PC-3 (cell line): ENCODE measurements at regions of chr20 and their contacts with region 1.

Region 1: DNA sequence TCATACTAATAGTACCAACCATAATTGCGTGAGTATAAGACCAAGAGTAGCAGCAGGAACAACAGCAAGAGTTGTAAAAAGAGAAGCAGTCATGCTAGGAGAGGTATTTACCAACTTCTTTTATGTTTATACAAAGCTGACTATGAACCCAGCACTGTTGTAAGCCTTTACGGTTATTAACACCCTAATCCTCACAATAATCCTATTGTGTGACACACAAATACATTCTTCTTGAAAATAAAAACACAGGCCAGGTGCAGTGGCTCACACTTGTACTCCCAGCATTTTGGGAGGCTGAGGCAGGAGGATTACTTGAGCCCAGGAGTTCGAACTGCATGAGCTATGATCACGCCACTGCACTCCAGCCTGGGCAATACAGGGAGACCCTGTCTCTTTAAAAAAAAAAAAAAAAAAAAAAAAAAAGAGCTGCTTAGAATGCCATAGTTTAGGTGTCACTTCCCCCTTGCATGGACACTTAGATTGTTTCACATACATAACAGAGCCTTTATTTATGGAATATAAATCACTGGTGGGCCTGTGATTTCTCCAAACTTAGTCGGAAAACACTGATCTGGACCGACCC is 20.2 kb downstream of the HCK start:
- DNase-seq: no peak
- ATAC-seq: no peak
- H3K4me3 ChIP-seq: no peak overlapping the region
- H3K27ac ChIP-seq: no peak overlapping the region
- H3K4me1 ChIP-seq: no peaks in the 10 kb centered on the region
- H3K27me3 ChIP-seq: peaks cover 55% of the 10 kb centered on the region
- CTCF ChIP-seq: no peak

Region 2: DNA sequence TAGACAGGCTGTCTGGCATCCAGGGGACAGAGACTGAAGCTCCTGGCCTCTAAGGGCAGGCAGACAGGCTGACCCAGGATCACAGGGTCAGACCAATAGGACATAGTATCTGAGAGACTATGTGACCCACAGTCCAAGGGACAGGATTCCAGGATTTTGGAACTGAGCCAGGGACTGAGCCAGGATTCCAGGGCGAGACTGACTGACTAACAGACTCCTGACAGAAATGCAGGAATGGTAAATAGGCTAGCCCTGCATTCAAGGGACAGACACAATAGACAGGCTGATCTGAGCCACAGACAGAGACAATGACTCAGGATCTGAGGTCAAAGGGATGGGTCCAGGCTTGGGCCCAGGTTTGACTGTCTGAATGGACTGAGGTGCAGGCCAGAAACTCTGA is 84.5 kb before region 1 on chr20:
- CTCF ChIA-PET with region 1: no interaction called
- POLR2A ChIA-PET with region 1: no interaction called
- intact Hi-C with region 1: no loop called
- DNase-seq: peak; percentile 50
- ATAC-seq: peak; percentile 65
- H3K4me3 ChIP-seq: no peak overlapping the region
- H3K27ac ChIP-seq: no peak overlapping the region
- H3K4me1 ChIP-seq: no peaks in the 10 kb centered on the region
- H3K27me3 ChIP-seq: peaks cover 4% of the 10 kb centered on the region; the same call in 1 of the 2 replicates
- CTCF ChIP-seq: no peak

Region 3: DNA sequence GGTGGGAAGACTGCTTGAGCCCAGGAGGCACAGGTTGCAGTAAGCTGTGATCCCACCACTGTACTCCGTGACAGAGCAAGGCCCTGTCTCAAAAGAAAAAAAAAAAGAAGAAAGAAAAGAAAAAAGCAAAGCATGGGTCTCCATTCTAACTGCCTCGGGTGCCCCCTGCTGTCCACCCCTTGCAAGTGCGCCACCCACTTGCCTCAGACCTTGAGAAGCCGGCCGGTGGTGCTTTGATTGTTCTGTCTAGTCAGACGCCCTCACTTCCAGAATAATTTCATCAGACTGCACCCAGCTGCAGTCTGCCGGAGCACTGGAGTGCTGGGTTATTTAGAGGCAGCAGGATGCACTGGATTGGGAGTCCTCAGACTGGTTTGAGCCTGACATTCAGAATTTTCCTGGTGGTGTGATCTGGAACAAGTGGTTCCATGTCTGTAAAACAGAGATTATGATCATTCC is 19.7 kb after region 1 on chr20:
- CTCF ChIA-PET with region 1: interaction called, 10 read pairs
- POLR2A ChIA-PET with region 1: no interaction called
- intact Hi-C with region 1: no loop called
- DNase-seq: peak; percentile 81
- ATAC-seq: peak; percentile 91
- H3K4me3 ChIP-seq: no peak overlapping the region
- H3K27ac ChIP-seq: no peak overlapping the region
- H3K4me1 ChIP-seq: no peaks in the 10 kb centered on the region
- H3K27me3 ChIP-seq: peaks cover 18% of the 10 kb centered on the region
- CTCF ChIP-seq: peak; percentile 91